Psoas muscle (tissue), 8 donors: ENCODE measurements at regions of chr1 and their contacts with region 1.

Region 1: DNA sequence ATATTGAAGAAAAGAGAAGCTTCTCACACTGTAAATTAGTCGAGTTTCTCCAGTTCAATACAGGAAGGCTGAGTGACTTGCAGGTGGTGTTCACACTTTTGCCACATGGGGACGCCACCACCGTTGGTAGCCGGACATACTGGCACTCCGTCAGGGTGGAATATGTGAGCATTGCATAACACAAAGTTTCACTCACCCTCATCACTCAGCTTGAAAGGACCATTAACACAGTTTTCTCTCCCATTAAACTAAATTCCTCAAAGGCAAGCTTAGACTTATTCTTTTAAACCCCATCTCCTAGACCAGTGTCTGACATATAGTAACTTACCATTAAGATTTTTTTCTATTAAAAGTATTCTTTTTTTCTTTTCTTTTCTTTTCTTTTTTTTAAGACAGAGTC is 105.3 kb upstream of the SERBP1 start:
- DNase-seq: peak; percentile 77 to 85
- ATAC-seq: peak; percentile 90 to 93 (median 92)
- H3K4me3 ChIP-seq: no peak overlapping the region
- H3K27ac ChIP-seq: no peak overlapping the region
- H3K4me1 ChIP-seq: peaks cover 11% of the 10 kb centered on the region
- H3K27me3 ChIP-seq: no peaks in the 10 kb centered on the region
- CTCF ChIP-seq: peak; percentile 95

Region 2: DNA sequence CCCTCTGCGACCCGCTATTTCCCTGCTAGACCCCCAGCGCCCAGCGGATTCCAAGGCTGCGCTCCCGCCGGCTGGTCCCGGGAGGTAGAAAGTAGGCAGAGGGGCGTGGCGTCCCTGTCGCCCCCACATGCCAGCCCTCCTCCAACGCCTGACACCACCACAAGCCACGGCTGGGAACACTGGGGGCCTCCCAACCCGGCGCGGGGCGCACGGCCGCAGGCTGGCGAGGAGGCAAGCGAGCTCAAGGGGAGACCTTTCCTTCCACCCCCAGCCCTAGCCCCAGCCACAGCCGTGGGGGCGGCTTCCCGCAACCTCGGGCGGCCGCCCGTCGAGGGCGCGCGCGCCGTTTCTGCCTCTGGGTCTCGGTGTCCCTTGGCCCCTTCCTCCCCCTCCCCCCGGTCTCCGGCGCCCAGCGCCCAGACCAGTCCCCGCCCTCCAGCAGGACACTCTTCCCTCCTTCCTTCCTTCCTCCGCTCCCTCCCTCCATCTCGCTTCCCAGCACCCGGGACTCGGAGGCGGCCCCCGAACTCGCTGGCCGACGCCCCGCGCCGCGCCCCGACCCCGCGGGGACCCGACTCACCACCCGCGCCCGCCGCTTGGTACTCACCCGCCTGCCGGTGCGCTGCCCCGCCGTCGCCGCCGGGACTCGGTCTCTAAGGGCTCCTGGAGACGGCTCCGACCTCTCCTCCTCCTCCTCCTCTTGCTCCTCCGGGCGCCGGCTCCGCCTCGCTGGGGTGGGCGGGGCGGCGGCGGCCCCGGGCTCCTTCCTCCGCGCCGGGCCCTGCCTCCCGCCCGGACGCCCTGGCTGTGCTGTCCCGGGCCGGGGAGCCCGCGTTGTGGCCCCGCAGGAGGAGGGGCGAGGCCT is 297.5 kb after region 1 on chr1 and contains the start of gene GNG12:
- intact Hi-C with region 1: loop called in 1 of 2 experiments (anchors 10 kb)
- DNase-seq: peak; percentile 74 to 84
- ATAC-seq: peak; percentile 79 to 82 (median 82)
- H3K4me3 ChIP-seq: peak within 1 kb of the TSS; percentile 91
- H3K27ac ChIP-seq: peak within 1 kb of the TSS; percentile 85
- H3K4me1 ChIP-seq: peaks cover 18% of the 10 kb centered on the region
- H3K27me3 ChIP-seq: no peaks in the 10 kb centered on the region
- CTCF ChIP-seq: no peak
- total RNA-seq, gene GNG12: 18.6 to 25.1 (median 20.3) TPM

Region 3: GRCh38 chr1:68111519-68112436 is 576.3 kb after region 1 on chr1:
- intact Hi-C with region 1: loop called in 1 of 2 experiments (anchors 5 kb)
- DNase-seq: peak; percentile 59 to 85
- ATAC-seq: peak; percentile 75 to 90 (median 87)
- H3K4me3 ChIP-seq: no peak overlapping the region
- H3K27ac ChIP-seq: no peak overlapping the region
- H3K4me1 ChIP-seq: peaks cover 11% of the 10 kb centered on the region
- H3K27me3 ChIP-seq: no peaks in the 10 kb centered on the region
- CTCF ChIP-seq: peak; percentile 60